Transverse colon (tissue), 4 donors: ENCODE measurements at regions of chr11 and their contacts with region 1.

Region 1: DNA sequence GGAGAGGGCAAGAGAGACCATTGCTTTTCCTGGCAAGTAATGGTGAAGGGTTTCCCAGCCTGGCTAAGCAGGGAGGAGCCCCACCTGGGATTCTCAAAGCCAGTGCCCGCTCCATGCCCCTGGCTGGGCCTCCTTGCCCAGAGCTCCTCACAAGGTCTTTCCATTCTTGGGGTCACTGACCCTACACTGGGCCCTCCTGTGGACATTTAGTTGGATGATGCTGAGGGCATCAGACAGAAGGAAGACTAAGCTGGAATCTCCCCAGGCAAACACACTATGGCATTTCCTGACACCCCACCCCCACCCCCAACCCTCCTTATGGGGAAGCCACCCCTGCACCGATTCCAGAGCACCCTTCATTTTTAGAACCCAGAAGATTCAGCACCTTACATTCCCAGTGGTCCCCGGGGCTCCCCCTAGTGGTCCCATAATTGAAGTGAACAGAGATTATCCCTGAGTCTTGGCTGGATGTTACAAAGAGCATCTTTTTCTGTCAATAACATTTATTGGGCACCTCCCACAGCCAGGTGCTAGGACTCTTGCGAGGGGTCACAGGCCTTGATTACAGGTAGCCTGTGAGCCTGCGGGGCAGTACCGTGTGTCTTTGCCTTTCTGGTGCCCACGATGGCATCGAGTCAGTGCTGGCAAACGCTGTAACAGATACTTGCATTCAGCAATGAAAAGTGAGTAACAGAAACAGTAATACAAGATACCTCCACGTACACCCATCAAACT is 548.5 kb downstream of the BUD13 start:
- DNase-seq: peak; percentile 44
- H3K4me3 ChIP-seq: no peak overlapping the region
- H3K27ac ChIP-seq: no peak overlapping the region
- H3K4me1 ChIP-seq: no peaks in the 10 kb centered on the region
- H3K27me3 ChIP-seq: no peaks in the 10 kb centered on the region
- CTCF ChIP-seq: peak; percentile 42 to 72 (median 64)
- EP300 ChIP-seq: no peak
- POLR2A ChIP-seq: no peak

Region 2: DNA sequence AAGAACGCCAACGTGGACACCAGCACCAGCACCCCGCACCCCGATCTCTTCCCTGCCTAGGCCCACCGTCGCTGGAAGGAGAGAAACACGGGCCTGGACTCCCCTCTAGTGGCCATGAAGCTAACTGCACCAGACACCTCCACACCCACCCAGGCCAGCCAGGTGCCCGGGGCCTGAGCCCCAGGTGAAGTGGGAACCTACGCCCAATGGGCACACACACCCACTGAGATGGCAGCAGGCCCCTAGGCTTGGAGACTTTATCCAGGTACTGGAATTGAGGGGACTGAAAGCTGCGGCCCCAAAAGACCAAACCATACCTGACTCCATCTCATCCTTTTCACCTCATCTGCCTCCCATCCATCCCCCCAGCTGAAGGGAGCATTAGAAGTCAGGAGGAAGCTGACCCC is 467.5 kb after region 1 on chr11:
- in situ Hi-C with region 1: loop called in 1 of 4 experiments (anchors 25 kb)
- intact Hi-C with region 1: no loop called
- DNase-seq: peak; percentile 44
- H3K4me3 ChIP-seq: no peak overlapping the region
- H3K27ac ChIP-seq: no peak overlapping the region
- H3K4me1 ChIP-seq: peaks cover 0 to 7% (median 2%) of the 10 kb centered on the region in 4 donors
- H3K27me3 ChIP-seq: no peaks in the 10 kb centered on the region
- CTCF ChIP-seq: peak; percentile 79 to 87 (median 81)
- EP300 ChIP-seq: no peak
- POLR2A ChIP-seq: no peak